Activated CD8-positive, alpha-beta memory T cell treated with anti-CD3 and anti-CD28 coated beads, Interleukin-2, amount 10 ng/mL, durations not matched to agents 7 days and 5 days (primary cell): ENCODE measurements at regions of chr1 and their contacts with region 1.

Region 1: GRCh38 chr1:45011837-45012638 is at the start of gene UROD:
- DNase-seq: peak; percentile 96
- ATAC-seq: peak; percentile 81
- H3K4me3 Mint-ChIP-seq: peak within 1 kb of the TSS; percentile 75
- H3K27ac Mint-ChIP-seq: peak within 1 kb of the TSS; percentile 93
- H3K4me1 Mint-ChIP-seq: peaks cover 35% of the 10 kb centered on the region
- H3K27me3 Mint-ChIP-seq: no peaks in the 10 kb centered on the region
- total RNA-seq, gene UROD: 68.5 to 72.7 TPM

Region 2: GRCh38 chr1:44213222-44214112 is 798.6 kb before region 1 on chr1 and contains the start of gene DMAP1:
- CTCF ChIA-PET with region 1: no interaction called
- DNase-seq: peak; percentile 90
- ATAC-seq: peak; percentile 90
- H3K4me3 Mint-ChIP-seq: peak within 1 kb of the TSS; percentile 90
- H3K27ac Mint-ChIP-seq: peak within 1 kb of the TSS; percentile 89
- H3K4me1 Mint-ChIP-seq: peaks cover 28% of the 10 kb centered on the region
- H3K27me3 Mint-ChIP-seq: no peaks in the 10 kb centered on the region
- total RNA-seq, gene DMAP1: 36.9 to 44.1 TPM

Region 3: DNA sequence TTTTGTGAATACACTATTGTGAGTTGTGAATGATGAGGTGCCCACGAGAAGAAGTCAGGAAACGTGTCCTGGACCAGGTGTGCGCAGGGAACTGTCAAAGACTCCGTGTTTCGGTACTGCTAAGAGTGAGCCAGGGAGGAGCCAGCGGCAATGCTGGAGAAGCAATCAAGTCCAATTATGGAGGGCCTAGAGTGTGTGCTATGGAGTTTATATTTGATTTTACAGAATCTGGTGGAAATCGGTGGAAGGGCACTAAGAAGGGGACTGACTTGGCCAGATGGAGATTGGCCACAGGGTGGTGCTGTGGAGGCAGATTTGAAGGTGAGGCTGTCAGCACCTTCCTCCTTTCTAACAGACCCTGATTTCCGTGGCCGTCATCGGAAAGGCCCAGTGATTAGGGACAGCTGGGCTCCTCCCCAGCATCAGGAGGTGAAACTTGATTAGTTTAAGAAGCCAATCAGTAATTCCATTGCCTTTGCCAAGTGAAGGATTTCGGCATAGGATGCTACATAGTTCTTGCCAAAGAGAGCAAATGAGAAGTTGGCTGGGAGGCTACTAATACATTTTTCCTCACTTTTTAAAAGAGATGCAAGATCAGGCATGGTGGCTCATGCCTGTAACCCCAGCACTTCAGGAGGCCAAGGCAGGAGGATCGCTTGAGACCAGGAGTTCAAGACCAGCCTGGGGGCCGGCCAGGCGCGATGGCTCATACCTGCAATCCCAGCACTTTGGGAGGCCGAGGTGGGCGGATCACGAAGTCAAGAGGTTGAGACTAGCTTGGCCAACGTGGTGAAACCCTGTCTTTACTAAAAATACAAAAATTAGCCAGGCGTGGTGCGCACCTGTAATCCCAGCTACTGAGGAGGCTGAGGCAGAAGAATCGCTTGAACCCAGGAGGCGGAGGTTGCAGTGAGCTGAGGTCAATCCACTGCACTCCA is 176.0 kb before region 1 on chr1:
- CTCF ChIA-PET with region 1: interaction called, 28 read pairs
- DNase-seq: peak; percentile 94
- ATAC-seq: peak; percentile 97
- H3K4me3 Mint-ChIP-seq: no peak overlapping the region
- H3K27ac Mint-ChIP-seq: peak overlapping the region; percentile 47
- H3K4me1 Mint-ChIP-seq: peaks cover 9% of the 10 kb centered on the region
- H3K27me3 Mint-ChIP-seq: no peaks in the 10 kb centered on the region

Region 4: GRCh38 chr1:45303582-45304310 is 291.7 kb after region 1 on chr1:
- CTCF ChIA-PET with region 1: interaction called, 341 read pairs
- DNase-seq: peak; percentile 99
- ATAC-seq: peak; percentile 89
- H3K4me3 Mint-ChIP-seq: peak overlapping the region; percentile 92
- H3K27ac Mint-ChIP-seq: peak overlapping the region; percentile 97
- H3K4me1 Mint-ChIP-seq: peaks cover 41% of the 10 kb centered on the region
- H3K27me3 Mint-ChIP-seq: no peaks in the 10 kb centered on the region

Region 5: DNA sequence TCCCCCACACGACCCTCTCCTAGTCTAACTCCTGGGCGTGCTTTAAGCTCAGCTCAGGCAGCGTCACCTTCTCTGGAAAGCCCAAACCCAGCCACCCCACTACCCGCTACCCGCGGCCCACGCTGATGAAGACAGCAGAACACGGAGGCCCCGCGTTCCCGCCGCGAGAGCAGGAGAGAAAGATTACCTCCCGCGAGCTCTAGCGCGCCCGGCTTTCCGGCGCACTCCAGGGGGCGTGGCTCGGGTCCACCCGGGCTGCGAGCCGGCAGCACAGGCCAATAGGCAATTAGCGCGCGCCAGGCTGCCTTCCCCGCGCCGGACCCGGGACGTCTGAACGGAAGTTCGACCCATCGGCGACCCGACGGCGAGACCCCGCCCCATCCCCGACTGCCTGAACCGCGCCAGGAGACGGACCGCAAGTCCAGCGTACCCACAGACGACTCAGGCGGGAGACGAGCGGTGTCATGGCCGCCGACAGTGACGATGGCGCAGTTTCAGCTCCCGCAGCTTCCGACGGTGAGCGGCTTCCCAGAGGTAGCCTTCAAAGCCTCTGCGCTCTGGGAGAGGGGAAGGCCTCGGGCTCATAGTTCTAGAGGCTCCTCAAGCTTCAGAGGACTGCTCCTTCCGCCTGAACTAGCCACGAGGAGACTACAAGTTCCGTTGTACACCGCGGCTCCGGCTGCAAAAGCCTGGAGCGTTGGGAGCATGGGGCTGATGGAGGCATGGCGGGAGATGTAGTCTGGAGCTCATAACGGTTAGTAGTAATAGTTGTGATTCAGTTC is 327.9 kb after region 1 on chr1 and contains the starts of genes MUTYH and TOE1:
- CTCF ChIA-PET with region 1: interaction called, 12 read pairs
- DNase-seq: peak; percentile 98
- ATAC-seq: peak; percentile 88
- H3K4me3 Mint-ChIP-seq: peak within 1 kb of the TSS; percentile 99
- H3K27ac Mint-ChIP-seq: peak within 1 kb of the TSS; percentile 99
- H3K4me1 Mint-ChIP-seq: peaks cover 54% of the 10 kb centered on the region
- H3K27me3 Mint-ChIP-seq: no peaks in the 10 kb centered on the region
- total RNA-seq, gene MUTYH: 65.3 to 67.2 TPM
- total RNA-seq, gene TOE1: 21.4 to 26.5 TPM